ENCODE measurements at regions of chr11 and their contacts with region 1.

Region 1: DNA sequence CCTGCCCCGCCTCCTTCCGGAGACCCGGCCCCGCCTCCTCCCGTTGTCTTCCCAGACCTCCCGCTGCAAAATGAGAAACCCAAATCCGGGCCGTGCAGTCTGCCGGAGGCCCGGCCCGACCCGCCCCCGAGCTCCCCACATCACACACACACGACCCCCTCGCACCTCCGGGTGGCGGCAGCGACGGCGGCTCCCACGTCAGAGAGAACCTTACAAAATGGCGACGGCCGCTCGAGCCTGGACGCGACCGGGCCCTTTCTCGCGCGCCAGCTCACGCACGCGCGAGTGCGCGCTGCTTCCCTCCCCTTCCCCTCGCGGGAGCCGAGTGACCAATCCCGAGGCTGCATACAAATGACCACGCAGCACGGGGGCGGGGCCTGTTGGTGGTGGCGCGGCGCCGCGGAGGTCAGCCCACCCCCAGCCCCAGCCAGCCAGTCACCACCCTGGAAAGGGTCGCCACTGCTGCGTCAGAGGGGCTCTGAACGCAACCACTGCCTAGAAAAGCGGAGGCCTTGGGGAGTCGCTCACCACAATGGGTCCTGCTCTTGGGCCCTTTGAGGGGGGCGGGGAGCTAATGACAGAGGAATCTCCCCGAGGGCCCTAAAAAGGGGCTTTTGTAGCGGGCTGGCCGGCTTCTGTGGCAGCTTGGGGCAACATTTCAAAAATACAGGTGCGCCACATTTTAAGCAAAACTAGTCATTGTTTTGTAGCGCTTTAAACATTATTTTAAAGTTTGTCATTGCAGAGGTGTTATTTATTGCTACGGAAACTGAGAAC is at the start of gene RBM4B:
- DNase-seq: peak; percentile 97
- H3K4me3 ChIP-seq: peak within 1 kb of the TSS; percentile 75
- H3K27ac ChIP-seq: peak within 1 kb of the TSS; percentile 91
- H3K4me1 ChIP-seq: no peaks in the 10 kb centered on the region
- H3K27me3 ChIP-seq: no peaks in the 10 kb centered on the region
- CTCF ChIP-seq: no peak
- total RNA-seq, gene RBM4B: 14.1 to 16.5 TPM

Region 2: GRCh38 chr11:66408488-66409214 is 269.1 kb before region 1 on chr11:
- intact Hi-C with region 1: loop called (anchors 5 kb)
- DNase-seq: peak; percentile 90
- H3K4me3 ChIP-seq: peak overlapping the region; percentile 24
- H3K27ac ChIP-seq: no peak overlapping the region
- H3K4me1 ChIP-seq: peaks cover 4% of the 10 kb centered on the region
- H3K27me3 ChIP-seq: peaks cover 4% of the 10 kb centered on the region
- CTCF ChIP-seq: peak; percentile 100

Region 3: GRCh38 chr11:66579017-66579606 is 98.7 kb before region 1 on chr11:
- intact Hi-C with region 1: loop called (anchors 1 kb)
- DNase-seq: peak; percentile 73
- H3K4me3 ChIP-seq: no peak overlapping the region
- H3K27ac ChIP-seq: no peak overlapping the region
- H3K4me1 ChIP-seq: no peaks in the 10 kb centered on the region
- H3K27me3 ChIP-seq: no peaks in the 10 kb centered on the region
- CTCF ChIP-seq: peak; percentile 65

Measured in colonic mucosa (tissue), 4 donors.